Heart right ventricle (tissue), 16 donors: ENCODE measurements at regions of chr9 and their contacts with region 1.

Region 1: DNA sequence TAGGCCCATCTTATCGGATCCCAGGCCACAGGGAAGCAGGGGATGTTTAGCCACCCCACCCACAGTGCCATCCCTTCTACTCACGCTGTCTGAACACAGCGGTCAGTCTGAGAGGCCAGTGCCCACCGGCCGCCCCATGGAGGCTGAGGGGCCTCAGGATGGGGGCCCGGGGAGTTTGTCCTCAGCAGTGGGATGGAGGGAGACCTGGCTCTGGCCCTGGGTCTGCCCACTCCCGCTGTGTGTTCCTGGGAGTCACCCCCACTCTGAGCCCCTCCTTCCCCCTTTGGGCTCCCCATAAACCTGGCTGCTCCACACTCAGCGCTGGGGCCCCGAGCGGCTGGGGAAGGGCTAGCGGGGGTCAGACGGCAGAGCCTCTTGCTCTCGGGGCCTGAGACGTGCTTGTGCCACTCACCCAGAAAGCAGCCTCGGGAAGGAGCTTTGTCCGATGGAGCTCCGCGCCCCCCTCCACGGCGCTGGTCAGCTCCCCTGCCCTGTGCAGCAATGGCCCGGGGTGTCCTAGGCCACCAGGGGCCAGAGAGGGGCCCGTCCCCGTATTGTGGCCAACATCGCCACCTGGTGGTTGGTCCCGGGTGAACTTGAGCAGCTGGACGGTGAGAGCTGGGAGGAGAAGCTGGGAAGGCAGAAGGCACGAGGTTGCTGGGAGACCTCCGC is 10.9 kb upstream of the LAMC3 start:
- DNase-seq: peak; percentile 69 to 76
- ATAC-seq: peak; percentile 76 to 93 (median 85)
- H3K4me3 ChIP-seq: no peak overlapping the region
- H3K27ac ChIP-seq: no peak overlapping the region
- H3K4me1 ChIP-seq: peaks cover 0 to 11% (median 3%) of the 10 kb centered on the region in 9 donors
- H3K27me3 ChIP-seq: peaks cover 0 to 51% (median 43%) of the 10 kb centered on the region in 7 donors
- CTCF ChIP-seq: peak; percentile 44 to 74 (median 69)

Region 2: GRCh38 chr9:130701056-130702022 is 296.7 kb before region 1 on chr9:
- intact Hi-C with region 1: loop called in 5 of 10 experiments (anchors 5 to 10 kb)
- DNase-seq: peak; percentile 77 to 85
- ATAC-seq: peak; percentile 85 to 97 (median 94)
- H3K4me3 ChIP-seq: no peak overlapping the region
- H3K27ac ChIP-seq: peak overlapping the region in 2 of 10 donors; percentile 37 to 65
- H3K4me1 ChIP-seq: peaks cover 0 to 18% (median 6%) of the 10 kb centered on the region in 9 donors
- H3K27me3 ChIP-seq: no peaks in the 10 kb centered on the region
- CTCF ChIP-seq: peak; percentile 81 to 98 (median 95)

Region 3: GRCh38 chr9:130707225-130707976 is 290.7 kb before region 1 on chr9:
- intact Hi-C with region 1: loop called in 5 of 10 experiments (anchors 5 to 10 kb)
- DNase-seq: peak in 1 of 2 donors; percentile 74
- ATAC-seq: peak in 4 of 8 donors; percentile 18 to 41 (median 28)
- H3K4me3 ChIP-seq: no peak overlapping the region
- H3K27ac ChIP-seq: no peak overlapping the region
- H3K4me1 ChIP-seq: peaks cover 0 to 8% (median 4%) of the 10 kb centered on the region in 9 donors
- H3K27me3 ChIP-seq: no peaks in the 10 kb centered on the region
- CTCF ChIP-seq: peak; percentile 66 to 90 (median 79)

Region 4: GRCh38 chr9:130866474-130866965 is 131.5 kb before region 1 on chr9:
- intact Hi-C with region 1: loop called in 7 of 10 experiments (anchors 2 to 5 kb)
- DNase-seq: peak in 1 of 2 donors; percentile 75
- ATAC-seq: peak in 5 of 8 donors; percentile 43 to 56 (median 47)
- H3K4me3 ChIP-seq: no peak overlapping the region
- H3K27ac ChIP-seq: peak overlapping the region in 1 of 10 donors; percentile 2
- H3K4me1 ChIP-seq: peaks cover 0 to 74% (median 36%) of the 10 kb centered on the region in 9 donors
- H3K27me3 ChIP-seq: no peaks in the 10 kb centered on the region
- CTCF ChIP-seq: peak; percentile 63 to 85 (median 77)

Region 5: DNA sequence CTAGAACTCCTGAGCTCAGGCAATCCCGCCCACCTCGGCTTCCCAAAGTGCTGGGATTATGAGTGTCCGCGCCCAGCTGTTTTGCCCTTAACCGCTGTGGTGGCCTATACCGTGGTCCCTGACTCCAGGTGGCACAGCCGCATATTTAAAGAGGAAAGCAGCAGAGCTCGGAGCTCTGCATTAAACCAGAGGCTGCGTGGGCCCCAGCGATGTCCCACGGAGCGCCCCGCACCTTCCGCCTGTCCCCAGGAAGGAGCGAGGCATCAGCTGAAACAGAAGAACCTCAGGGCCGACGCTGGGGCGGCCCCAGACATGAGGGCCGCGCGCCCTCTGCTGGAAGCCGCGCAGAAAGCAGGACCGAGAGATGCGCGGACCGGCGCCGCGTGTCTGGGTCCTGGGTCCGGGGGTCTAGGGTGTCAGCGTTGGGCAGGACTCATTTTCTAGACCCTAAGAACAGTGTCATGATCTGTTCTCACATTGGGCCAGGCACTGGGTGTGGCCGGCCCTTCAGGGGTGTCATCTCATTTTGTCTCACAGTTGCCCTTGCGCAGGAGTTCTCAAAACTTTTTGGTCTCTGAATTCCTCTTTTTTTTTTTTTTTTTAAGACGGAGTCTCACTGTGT is 48.6 kb after region 1 on chr9:
- intact Hi-C with region 1: no loop called
- DNase-seq: peak; percentile 39 to 69
- ATAC-seq: peak; percentile 80 to 90 (median 84)
- H3K4me3 ChIP-seq: no peak overlapping the region
- H3K27ac ChIP-seq: no peak overlapping the region
- H3K4me1 ChIP-seq: peaks cover 0 to 7% (median 0%) of the 10 kb centered on the region in 9 donors
- H3K27me3 ChIP-seq: peaks cover 0 to 6% (median 0%) of the 10 kb centered on the region in 7 donors
- CTCF ChIP-seq: peak; percentile 77 to 97 (median 94)